Activated CD8-positive, alpha-beta T cell treated with anti-CD3 and anti-CD28 coated beads, Interleukin-2, amount 10 ng/mL, durations not matched to agents 7 days and 5 days (primary cell): ENCODE measurements at regions of chr1 and their contacts with region 1.

Region 1: GRCh38 chr1:53945433-53946251 is at the start of gene IFT25:
- DNase-seq: peak; percentile 98
- ATAC-seq: peak; percentile 83
- H3K4me3 Mint-ChIP-seq: peak within 1 kb of the TSS; percentile 98
- H3K27ac Mint-ChIP-seq: peak within 1 kb of the TSS; percentile 97
- H3K4me1 Mint-ChIP-seq: peaks cover 48% of the 10 kb centered on the region
- H3K27me3 Mint-ChIP-seq: no peaks in the 10 kb centered on the region
- total RNA-seq, gene IFT25: 83.1 to 87.1 TPM

Region 2: GRCh38 chr1:53878492-53879105 is 67.0 kb before region 1 on chr1:
- CTCF ChIA-PET with region 1: interaction called, 18 read pairs
- POLR2A ChIA-PET with region 1: interaction called, 3 read pairs
- DNase-seq: no peak
- ATAC-seq: no peak
- H3K4me3 Mint-ChIP-seq: no peak overlapping the region
- H3K27ac Mint-ChIP-seq: no peak overlapping the region
- H3K4me1 Mint-ChIP-seq: no peaks in the 10 kb centered on the region
- H3K27me3 Mint-ChIP-seq: no peaks in the 10 kb centered on the region

Region 3: GRCh38 chr1:53889304-53890298 is 56.0 kb before region 1 on chr1 and contains the start of gene YIPF1:
- CTCF ChIA-PET with region 1: interaction called, 9 read pairs
- POLR2A ChIA-PET with region 1: interaction called, 18 read pairs
- DNase-seq: peak; percentile 90
- ATAC-seq: peak; percentile 99
- H3K4me3 Mint-ChIP-seq: peak within 1 kb of the TSS; percentile 95
- H3K27ac Mint-ChIP-seq: peak within 1 kb of the TSS; percentile 92
- H3K4me1 Mint-ChIP-seq: peaks cover 27% of the 10 kb centered on the region
- H3K27me3 Mint-ChIP-seq: no peaks in the 10 kb centered on the region
- total RNA-seq, gene YIPF1: 14.9 to 16.3 TPM

Region 4: DNA sequence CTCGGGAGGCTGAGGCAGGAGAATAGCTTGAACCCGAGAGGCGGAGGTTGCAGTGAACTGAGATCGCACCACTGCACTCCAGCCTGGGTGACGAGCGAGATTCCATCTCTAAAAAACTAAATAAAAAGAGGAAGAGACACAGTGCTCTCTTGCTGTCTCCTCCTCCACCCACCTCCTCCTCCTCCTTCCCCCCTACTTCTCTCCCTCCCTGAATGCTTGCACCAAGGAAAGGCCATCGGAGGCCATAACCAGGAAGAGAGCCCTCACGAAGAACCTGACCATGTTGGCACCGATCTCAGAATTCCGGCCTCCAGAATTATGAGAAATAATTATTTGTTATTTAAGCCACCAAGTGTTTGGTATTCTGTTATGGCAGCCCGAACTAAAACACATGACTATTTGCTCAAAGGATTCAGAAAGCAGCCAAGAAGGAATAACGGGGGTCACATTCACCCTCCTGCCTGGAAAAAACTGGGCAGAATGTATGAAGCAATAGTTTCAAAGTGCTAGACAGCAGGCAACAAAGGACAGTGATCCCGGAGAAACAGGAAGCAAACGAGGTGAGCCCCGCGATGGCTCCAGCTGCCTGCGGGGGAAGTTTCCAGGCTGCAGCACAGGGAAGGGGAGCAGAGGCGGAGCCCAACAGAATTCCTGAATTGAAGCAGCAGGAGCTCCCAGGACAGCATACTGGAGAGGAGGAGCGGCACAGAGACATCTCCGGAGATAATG is 36.6 kb after region 1 on chr1:
- CTCF ChIA-PET with region 1: no interaction called
- POLR2A ChIA-PET with region 1: no interaction called
- DNase-seq: no peak
- ATAC-seq: no peak
- H3K4me3 Mint-ChIP-seq: no peak overlapping the region
- H3K27ac Mint-ChIP-seq: no peak overlapping the region
- H3K4me1 Mint-ChIP-seq: no peaks in the 10 kb centered on the region
- H3K27me3 Mint-ChIP-seq: no peaks in the 10 kb centered on the region

Region 5: DNA sequence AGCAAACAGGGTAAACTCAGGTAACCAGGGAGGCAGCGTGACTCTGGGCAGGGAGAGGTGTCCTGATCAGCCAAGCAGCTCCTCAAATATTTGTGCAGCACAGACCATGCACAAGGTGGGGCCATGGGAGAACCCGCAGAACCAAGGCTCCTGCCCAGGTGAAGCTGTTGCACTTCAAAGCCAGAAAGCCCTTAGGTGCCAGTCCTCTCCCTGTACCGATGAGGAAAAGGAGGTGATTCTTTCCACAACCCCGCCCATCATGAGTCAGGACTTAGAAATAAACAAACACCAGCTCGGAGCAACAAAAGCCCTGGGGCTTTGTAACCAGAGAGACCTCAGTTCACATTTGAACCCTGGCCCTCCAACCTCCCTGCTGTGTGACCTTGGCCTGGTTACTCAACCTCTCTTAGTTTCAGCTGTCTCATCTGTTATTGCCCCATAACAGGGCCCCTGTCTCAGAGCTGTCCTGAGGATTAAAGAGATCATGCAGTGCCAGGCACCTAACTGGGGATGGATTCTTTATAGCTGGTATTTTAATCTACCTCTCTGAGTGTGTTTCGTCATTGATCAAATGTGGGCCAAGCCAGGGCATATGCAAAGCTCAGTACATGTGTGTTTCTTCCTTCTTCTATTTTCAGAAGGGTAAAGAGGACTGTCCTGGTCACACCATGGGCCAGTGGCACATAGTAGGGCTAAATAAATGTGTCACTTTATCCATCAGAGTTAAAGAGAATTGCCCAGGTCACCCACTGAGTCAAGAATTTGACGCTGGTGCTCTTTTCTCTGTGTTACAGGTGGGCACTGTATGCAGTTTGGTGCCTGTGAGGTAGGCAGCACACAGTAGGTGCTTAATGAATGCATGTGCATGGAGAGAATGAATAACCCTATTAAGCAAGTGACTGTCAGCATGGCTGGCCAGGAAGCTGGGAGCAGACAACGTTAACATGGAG is 70.9 kb after region 1 on chr1:
- CTCF ChIA-PET with region 1: no interaction called
- POLR2A ChIA-PET with region 1: no interaction called
- DNase-seq: no peak
- ATAC-seq: no peak
- H3K4me3 Mint-ChIP-seq: no peak overlapping the region
- H3K27ac Mint-ChIP-seq: no peak overlapping the region
- H3K4me1 Mint-ChIP-seq: no peaks in the 10 kb centered on the region
- H3K27me3 Mint-ChIP-seq: peaks cover 2% of the 10 kb centered on the region

Region 6: DNA sequence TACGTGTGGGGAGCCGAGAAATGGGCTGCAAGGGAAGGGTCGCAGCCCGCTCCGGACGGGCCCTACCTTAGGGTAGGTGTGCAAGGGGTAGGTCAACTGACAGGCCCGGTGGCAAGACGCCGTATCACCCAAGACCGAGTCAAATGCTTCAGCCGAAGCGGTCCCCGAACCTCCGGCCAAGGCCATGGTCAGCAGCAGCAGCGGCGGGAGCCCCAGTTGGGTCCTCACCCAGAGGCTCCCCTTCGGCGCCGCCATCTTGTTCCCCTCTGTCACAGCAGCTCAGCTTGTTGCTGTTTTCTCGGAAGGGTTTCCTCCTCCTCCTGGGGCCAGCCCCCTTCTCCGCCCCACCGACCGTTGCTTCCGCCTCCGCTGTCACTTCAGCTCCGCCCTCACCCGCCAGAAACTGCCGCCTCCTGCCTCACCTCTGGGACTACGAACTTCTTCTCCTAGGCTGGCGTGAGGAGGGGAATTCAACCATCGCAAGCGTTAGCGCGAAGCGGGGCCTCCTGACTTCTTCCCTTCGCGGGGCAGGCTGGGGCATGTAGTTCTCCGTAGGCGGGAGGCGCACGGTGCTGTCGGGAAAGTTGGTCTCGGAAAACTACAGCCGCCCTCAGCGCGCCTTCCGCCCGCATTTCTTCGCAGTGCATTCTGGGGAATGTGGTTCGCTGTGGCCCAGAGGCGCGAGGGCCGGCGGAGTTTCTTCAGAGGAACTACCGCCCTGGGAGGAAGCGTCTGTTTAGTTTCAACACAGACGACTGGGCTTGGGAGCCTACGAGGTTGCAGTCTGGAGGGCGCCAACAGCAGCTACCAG is 107.5 kb after region 1 on chr1 and contains the starts of genes TCEANC2 and TMEM59:
- CTCF ChIA-PET with region 1: interaction called, 4 read pairs
- POLR2A ChIA-PET with region 1: interaction called, 11 read pairs
- DNase-seq: peak; percentile 99
- ATAC-seq: peak; percentile 96
- H3K4me3 Mint-ChIP-seq: no peak within 1 kb of the TSS
- H3K27ac Mint-ChIP-seq: no peak within 1 kb of the TSS
- H3K4me1 Mint-ChIP-seq: peaks cover 29% of the 10 kb centered on the region
- H3K27me3 Mint-ChIP-seq: no peaks in the 10 kb centered on the region
- total RNA-seq, gene TCEANC2: 11.6 to 12.0 TPM
- total RNA-seq, gene TMEM59: 154 to 156 TPM